Activated B cell treated with CpG ODN at 0.5 μM for 24 hours (primary cell): ENCODE measurements at regions of chr2 and their contacts with region 1.

Region 1: GRCh38 chr2:241315093-241315878 is at the start of gene HDLBP:
- DNase-seq: peak; percentile 100
- ATAC-seq: peak; percentile 73
- H3K4me3 Mint-ChIP-seq: peak within 1 kb of the TSS; percentile 98
- H3K27ac Mint-ChIP-seq: peak within 1 kb of the TSS; percentile 100
- H3K4me1 Mint-ChIP-seq: peaks cover 78% of the 10 kb centered on the region
- H3K27me3 Mint-ChIP-seq: no peaks in the 10 kb centered on the region
- CTCF ChIP-seq: no peak
- total RNA-seq, gene HDLBP: 158 and 168 TPM in 2 replicates

Region 2: DNA sequence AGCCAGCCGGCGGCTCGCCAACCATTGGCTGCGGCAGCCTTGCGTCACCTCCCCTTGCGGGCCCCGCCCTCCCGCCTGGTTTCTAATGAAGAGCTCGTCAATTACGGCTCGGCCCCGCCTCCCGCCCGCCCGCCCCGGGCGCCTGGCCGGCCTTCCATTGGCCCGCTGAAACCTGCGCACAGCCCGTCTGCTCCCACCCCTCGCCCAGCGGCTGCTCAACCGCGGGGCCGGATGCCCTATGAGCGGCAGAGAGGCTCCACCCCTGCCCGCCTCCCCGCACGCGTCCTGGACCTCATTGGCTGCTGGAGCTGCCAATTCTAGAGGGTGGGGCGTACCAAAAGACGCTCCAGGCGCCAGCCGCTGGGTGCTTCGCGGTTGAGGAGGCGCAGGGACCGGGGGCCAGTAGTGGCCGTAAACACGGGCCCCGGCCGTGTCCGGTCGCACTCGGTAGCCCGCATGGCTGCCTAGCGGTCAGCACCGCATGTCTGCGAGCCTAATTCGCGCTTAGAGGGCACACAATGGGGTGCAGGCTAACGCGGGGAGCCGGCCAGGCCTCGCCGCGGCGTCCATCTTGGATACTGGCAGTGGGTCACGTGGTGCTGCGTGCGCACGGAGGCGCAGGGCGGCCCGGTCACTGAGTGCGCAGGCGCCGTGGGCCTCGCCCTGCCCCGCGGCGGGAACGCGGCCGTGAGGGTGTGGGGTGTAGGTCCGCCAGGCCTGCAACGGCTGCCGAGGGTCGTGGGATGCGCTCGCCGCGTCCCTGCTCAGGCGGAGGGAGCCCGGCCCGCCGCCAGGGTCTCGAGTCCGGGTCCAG is 1914.0 kb before region 1 on chr2:
- CTCF ChIA-PET with region 1: no interaction called
- POLR2A ChIA-PET with region 1: no interaction called
- intact Hi-C with region 1: loop called (anchors 10 kb)
- DNase-seq: peak; percentile 98
- ATAC-seq: peak; percentile 87
- H3K4me3 Mint-ChIP-seq: peak overlapping the region; percentile 92
- H3K27ac Mint-ChIP-seq: peak overlapping the region; percentile 98
- H3K4me1 Mint-ChIP-seq: peaks cover 31% of the 10 kb centered on the region
- H3K27me3 Mint-ChIP-seq: no peaks in the 10 kb centered on the region
- CTCF ChIP-seq: no peak

Region 3: DNA sequence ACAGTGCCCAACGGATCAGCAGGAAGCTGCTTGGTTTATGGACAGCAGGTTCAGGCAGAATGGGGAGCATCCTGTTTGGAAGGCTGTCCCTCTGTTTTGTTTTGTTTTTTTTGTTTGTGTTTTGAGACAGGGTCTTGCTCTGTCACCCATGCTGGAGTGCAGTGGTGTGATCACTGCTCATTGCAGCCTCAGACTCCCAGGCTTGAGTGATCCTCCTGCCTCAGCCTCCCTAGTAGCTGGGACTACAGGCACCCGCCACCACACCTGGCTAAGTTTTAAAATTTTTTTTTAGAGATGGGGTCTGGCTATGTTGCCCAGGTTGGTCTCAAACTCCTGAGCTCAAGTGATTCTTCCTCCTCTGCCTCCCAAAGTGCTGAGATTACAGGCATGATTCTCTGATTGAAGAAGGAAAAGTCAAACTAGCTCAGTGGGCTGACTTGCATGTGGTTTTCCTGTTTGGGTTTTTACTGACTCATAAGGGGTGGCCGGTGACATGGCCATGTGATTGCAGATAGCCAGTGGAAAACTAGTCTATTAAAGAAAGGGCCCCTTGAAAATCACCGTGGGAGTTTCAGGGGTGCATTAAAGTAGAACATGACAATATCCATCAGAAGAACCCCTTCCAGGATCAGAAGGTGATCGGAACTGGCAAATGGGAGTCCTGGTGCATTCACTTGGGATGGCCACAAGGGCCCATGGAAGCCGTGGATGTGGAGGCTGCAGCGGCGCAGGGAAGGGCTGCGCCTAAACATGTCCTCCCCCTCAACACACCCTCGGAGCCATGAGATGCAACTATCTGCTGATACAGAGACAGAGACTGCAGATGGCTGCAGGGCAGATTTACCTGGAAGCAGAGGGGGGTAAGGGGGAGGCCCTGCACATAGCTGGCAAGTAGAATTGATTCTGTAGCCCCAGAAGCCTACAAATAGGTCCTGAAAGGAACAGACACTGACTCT is 659.1 kb before region 1 on chr2:
- CTCF ChIA-PET with region 1: no interaction called
- POLR2A ChIA-PET with region 1: no interaction called
- intact Hi-C with region 1: no loop called
- DNase-seq: no peak
- ATAC-seq: no peak
- H3K4me3 Mint-ChIP-seq: no peak overlapping the region
- H3K27ac Mint-ChIP-seq: no peak overlapping the region
- H3K4me1 Mint-ChIP-seq: no peaks in the 10 kb centered on the region
- H3K27me3 Mint-ChIP-seq: peaks cover 32% of the 10 kb centered on the region
- CTCF ChIP-seq: no peak

Region 4: GRCh38 chr2:241041589-241042158 is 273.6 kb before region 1 on chr2:
- CTCF ChIA-PET with region 1: no interaction called
- POLR2A ChIA-PET with region 1: interaction called, 4 read pairs
- intact Hi-C with region 1: loop called (anchors 5 kb)
- DNase-seq: no peak
- ATAC-seq: peak; percentile 75
- H3K4me3 Mint-ChIP-seq: peak overlapping the region; percentile 74
- H3K27ac Mint-ChIP-seq: peak overlapping the region; percentile 96
- H3K4me1 Mint-ChIP-seq: peaks cover 70% of the 10 kb centered on the region
- H3K27me3 Mint-ChIP-seq: no peaks in the 10 kb centered on the region
- CTCF ChIP-seq: no peak

Region 5: GRCh38 chr2:241300000-241300399 is 15.3 kb before region 1 on chr2:
- CTCF ChIA-PET with region 1: no interaction called
- POLR2A ChIA-PET with region 1: interaction called, 28 read pairs
- intact Hi-C with region 1: loop called (anchors 1 kb)
- DNase-seq: no peak
- ATAC-seq: no peak
- H3K4me3 Mint-ChIP-seq: no peak overlapping the region
- H3K27ac Mint-ChIP-seq: no peak overlapping the region
- H3K4me1 Mint-ChIP-seq: peaks cover 43% of the 10 kb centered on the region
- H3K27me3 Mint-ChIP-seq: no peaks in the 10 kb centered on the region
- CTCF ChIP-seq: no peak

Region 6: GRCh38 chr2:241372361-241372992 is 57.2 kb after region 1 on chr2:
- CTCF ChIA-PET with region 1: interaction called, 3 read pairs
- POLR2A ChIA-PET with region 1: interaction called, 14 read pairs
- intact Hi-C with region 1: no loop called
- DNase-seq: no peak
- ATAC-seq: no peak
- H3K4me3 Mint-ChIP-seq: no peak overlapping the region
- H3K27ac Mint-ChIP-seq: peak overlapping the region; percentile 46
- H3K4me1 Mint-ChIP-seq: peaks cover 68% of the 10 kb centered on the region
- H3K27me3 Mint-ChIP-seq: no peaks in the 10 kb centered on the region
- CTCF ChIP-seq: no peak

Region 7: DNA sequence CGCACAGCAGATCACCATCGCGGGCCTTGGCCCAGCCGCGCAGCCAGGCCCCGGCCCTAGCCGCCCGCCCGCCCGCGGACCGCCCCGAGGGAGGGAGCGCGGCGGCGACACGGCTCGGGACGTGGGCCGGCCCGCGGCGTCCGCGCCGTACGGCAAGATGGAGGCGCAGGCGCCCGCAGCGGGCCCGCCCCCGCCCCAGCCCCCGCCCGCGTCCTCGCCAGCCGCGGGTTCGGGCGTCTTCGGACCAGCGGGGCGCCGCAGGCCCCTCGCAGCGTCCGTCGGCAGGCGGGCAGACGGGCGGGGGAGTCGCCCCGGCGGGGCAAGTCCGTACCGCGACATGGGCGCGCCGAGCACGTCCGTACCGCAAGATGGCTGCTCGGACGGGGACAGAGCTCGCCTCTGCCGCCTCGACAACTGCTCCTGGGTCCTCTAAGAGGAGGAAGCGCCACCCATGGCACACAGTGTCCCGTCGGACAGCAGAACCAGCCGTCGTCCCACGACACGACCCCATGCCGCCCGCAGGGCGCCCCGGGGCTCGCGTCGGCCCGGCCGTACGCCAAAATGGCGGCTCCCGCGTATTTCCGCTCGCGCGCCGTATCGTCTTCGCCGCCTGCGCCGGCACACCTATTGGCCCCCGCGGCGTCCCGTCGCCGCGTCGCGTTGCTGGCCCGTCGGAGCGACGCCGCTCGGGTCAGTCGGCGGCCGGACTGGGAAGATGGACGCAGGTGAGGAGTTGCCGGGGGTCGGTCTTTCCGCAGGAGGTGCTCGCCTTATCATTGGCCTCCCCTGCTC is 321.9 kb after region 1 on chr2 and contains the starts of genes ATG4B and THAP4:
- CTCF ChIA-PET with region 1: no interaction called
- POLR2A ChIA-PET with region 1: interaction called, 11 read pairs
- intact Hi-C with region 1: no loop called
- DNase-seq: peak; percentile 84
- ATAC-seq: peak; percentile 72
- H3K4me3 Mint-ChIP-seq: peak within 1 kb of the TSS; percentile 91
- H3K27ac Mint-ChIP-seq: peak within 1 kb of the TSS; percentile 83
- H3K4me1 Mint-ChIP-seq: peaks cover 45% of the 10 kb centered on the region
- H3K27me3 Mint-ChIP-seq: no peaks in the 10 kb centered on the region
- CTCF ChIP-seq: no peak
- total RNA-seq, gene ATG4B: 92.6 and 101 TPM in 2 replicates
- total RNA-seq, gene THAP4: 23.7 and 26.7 TPM in 2 replicates

Region 8: DNA sequence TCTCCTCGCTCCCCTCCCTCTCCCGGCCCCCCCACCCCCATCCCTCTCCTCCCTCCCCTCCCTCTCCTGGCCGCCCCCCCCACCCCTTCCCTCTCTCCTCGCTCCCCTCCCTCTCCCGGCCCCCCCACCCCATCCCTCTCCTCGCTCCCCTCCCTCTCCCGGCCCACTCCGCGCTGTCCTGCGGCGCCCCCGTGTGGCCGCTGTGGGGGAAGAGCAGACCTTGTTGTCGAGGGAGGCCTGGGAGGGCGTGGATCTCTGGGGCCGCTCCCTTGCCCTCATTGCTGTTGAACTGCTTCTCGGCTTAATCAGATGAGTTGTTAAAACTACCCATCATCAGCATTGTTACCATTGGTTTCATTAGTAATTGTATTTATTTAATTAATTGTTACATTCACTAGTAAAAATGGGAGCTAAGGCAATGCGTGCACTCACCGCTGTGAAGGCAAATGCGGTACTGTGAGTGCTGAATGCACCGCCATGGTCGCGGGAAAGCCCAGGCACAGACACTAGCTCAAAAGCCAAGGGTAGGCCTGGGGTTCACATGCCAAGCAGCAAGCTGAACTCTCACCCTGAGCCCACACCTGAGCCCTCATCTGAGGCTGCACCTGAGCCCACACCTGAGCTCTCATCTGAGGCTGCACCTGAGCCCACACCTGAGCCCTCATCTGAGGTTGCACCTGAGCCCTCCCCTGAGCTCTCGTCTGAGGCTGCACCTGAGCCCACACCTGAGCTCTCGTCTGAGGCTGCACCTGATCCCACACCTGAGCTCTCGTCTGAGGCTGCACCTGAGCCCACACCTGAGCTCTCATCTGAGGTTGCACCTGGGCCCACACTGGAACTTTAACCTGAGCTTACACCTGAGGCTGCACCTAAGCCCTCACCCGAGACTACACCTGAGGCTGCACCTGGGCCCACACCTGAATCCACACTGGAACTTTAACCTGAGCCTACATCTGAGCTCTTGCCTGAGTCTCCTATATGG is 563.0 kb after region 1 on chr2:
- CTCF ChIA-PET with region 1: no interaction called
- POLR2A ChIA-PET with region 1: no interaction called
- intact Hi-C with region 1: loop called (anchors 1 kb)
- DNase-seq: peak; percentile 73
- ATAC-seq: no peak
- H3K4me3 Mint-ChIP-seq: no peak overlapping the region
- H3K27ac Mint-ChIP-seq: no peak overlapping the region
- H3K4me1 Mint-ChIP-seq: peaks cover 28% of the 10 kb centered on the region
- H3K27me3 Mint-ChIP-seq: no peaks in the 10 kb centered on the region
- CTCF ChIP-seq: no peak